HEK293 (cell line): ENCODE measurements at regions of chr20 and their contacts with region 1.

Region 1: GRCh38 chr20:38221119-38221589 is 39.4 kb downstream of the KIAA1755 start:
- H3K4me3 ChIP-seq: no peak overlapping the region
- H3K27ac ChIP-seq: no peak overlapping the region
- H3K4me1 ChIP-seq: no peaks in the 10 kb centered on the region
- CTCF ChIP-seq: peak; percentile 93

Region 2: DNA sequence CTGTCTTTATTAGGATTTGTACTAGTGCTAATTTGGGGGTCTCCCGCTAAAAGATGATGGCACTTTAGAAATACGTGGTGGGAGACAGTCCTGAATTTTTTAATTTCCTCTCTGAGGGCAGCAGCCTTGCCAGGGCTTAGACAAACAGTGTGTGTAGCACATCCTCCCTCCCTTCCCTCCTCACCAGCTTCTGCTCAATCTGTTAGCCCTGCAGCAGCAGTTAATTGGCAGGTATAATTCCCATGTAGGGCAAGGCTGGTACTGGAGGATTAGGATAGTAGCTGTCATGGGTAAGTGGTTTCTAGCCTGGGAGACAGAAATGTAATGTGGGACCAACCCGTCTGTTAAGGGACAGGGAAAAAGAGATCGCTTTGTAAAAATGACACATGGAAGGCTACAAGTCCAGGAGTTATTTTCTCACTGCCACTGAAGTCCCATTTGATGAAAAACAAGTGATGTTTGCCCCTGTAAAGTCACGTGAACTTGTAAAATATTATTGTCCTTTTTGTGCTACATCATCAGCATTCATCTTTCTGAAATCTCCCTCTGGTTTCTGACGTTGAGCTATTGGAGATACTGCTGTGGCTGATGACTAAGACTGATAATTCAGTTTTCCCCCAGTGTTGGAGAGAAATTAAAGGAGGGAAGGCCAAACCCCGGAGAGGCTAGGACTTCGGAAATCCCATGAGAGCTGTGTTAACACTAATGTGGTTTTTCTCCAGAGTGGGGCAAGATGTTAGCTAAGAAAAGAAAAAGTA is 486.7 kb before region 1 on chr20:
- CTCF ChIA-PET with region 1: no interaction called
- POLR2A ChIA-PET with region 1: no interaction called
- H3K4me3 ChIP-seq: no peak overlapping the region
- H3K27ac ChIP-seq: no peak overlapping the region
- H3K4me1 ChIP-seq: peaks cover 13% of the 10 kb centered on the region
- CTCF ChIP-seq: no peak

Region 3: DNA sequence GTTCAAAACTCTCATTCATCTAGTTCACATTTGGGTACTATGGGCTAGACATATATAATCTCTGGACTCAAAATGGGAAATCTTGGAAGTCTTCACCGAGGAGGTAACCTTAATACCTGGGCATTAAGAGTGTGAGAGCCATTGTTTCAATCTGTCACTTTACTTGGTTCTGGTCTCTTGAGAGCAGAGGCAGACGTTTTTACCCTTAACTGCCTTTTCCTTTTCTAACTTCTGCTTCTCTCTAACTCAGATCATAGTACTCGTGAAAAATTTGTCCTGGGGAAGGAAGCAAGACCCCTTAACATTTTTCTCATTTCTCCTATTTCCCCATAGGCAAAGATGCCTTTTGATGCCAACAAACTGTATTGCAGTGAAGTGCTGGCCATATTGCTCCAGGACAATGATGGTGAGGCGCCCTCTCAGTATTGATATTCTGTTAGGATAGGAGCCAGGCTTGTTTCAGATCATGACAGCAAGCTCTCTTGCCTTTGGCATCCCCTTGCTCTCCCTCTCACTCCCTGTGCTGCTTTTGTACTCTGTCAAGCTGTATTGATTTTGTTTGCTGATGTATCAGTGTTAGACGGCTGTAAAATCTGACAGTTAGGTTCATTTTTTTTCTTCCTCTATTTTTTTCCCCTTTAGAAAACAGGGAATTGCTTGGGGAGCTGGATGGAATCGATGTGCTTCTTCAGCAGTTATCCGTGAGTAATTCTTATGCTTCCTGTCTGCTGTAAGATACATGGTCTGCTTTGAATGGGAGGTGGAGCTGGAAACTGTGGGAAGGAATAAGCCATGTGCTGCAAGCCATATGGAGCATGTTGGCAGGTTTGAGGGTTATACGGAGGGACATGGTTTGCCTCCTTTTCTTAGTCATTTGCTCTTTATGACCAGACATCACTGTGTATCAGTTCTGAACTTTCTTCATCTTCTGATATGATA is 443.9 kb before region 1 on chr20:
- CTCF ChIA-PET with region 1: no interaction called
- POLR2A ChIA-PET with region 1: no interaction called
- H3K4me3 ChIP-seq: no peak overlapping the region
- H3K27ac ChIP-seq: no peak overlapping the region
- H3K4me1 ChIP-seq: no peaks in the 10 kb centered on the region
- CTCF ChIP-seq: no peak

Region 4: DNA sequence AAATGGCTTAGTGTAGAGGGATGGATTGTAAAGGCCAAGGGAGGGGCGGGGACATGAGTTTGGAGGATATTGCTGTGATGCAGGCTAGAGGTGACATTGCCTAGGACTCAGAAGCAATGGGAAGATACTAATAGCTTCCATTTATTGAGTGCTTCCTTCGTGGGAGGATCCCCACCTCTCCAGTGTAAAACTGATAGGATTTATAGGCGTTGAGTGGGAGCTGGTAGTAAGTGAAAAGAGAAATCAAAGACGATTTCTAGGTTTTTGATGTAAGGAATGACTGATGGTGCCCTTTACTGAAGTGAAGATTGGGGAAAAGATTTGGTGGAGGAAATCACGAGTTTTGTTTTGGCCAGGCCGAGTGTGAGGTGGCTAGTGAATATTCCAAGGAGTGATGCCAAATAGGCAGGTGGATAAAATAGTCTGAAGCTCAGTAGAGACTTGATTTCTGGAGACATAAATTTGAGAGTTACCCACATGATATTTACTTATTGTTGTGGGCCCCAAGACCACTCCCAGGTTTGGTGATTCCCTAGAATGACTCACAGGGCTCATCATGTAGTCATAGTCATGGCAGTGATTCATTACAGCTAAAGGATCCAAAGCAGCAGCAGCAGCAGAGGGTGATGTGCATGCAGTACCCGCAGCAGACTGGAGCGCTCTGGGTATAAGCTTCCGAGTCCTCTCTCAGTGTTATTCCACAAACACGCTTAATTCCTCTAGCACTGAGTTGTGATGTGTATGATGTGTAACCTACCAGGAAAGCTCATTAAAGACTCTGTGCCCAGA is 177.4 kb before region 1 on chr20:
- CTCF ChIA-PET with region 1: interaction called, 12 read pairs
- POLR2A ChIA-PET with region 1: no interaction called
- H3K4me3 ChIP-seq: no peak overlapping the region
- H3K27ac ChIP-seq: no peak overlapping the region
- H3K4me1 ChIP-seq: no peaks in the 10 kb centered on the region
- CTCF ChIP-seq: no peak

Region 5: GRCh38 chr20:38113401-38114325 is 107.5 kb before region 1 on chr20:
- CTCF ChIA-PET with region 1: interaction called, 44 read pairs
- POLR2A ChIA-PET with region 1: no interaction called
- H3K4me3 ChIP-seq: no peak overlapping the region
- H3K27ac ChIP-seq: no peak overlapping the region
- H3K4me1 ChIP-seq: peaks cover 9% of the 10 kb centered on the region
- CTCF ChIP-seq: 0 out of 2 replicates have a peak, but pooled peaks have one; percentile 41

Region 6: GRCh38 chr20:38173237-38174156 is 47.7 kb before region 1 on chr20:
- CTCF ChIA-PET with region 1: interaction called, 52 read pairs
- POLR2A ChIA-PET with region 1: no interaction called
- H3K4me3 ChIP-seq: no peak overlapping the region
- H3K27ac ChIP-seq: no peak overlapping the region
- H3K4me1 ChIP-seq: no peaks in the 10 kb centered on the region
- CTCF ChIP-seq: no peak

Region 7: GRCh38 chr20:38242848-38243449 is 21.8 kb after region 1 on chr20:
- CTCF ChIA-PET with region 1: interaction called, 15 read pairs
- POLR2A ChIA-PET with region 1: no interaction called
- H3K4me3 ChIP-seq: no peak overlapping the region
- H3K27ac ChIP-seq: no peak overlapping the region
- H3K4me1 ChIP-seq: no peaks in the 10 kb centered on the region
- CTCF ChIP-seq: no peak

Region 8: DNA sequence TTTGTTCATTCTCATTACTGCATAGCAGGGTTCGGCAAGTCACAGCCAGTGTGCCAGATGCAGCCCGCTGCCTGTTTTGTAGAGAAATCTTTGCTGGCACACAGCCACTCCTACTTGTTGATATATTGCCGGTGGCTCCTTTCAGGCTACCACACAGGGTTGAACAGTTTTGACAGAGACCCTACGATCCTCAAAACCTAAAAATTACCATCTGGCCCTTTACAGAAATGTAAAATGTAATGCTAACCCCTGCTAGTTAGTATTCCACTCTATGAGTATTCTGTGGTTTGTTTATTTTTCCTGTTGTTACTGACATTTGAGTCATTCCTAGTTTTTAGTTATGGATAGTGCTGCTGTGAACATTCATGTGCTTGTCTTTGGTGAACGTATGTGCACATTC is 752.5 kb after region 1 on chr20:
- CTCF ChIA-PET with region 1: no interaction called
- POLR2A ChIA-PET with region 1: no interaction called
- H3K4me3 ChIP-seq: no peak overlapping the region
- H3K27ac ChIP-seq: no peak overlapping the region
- H3K4me1 ChIP-seq: peaks cover 5% of the 10 kb centered on the region; the same call in 1 of the 2 replicates
- CTCF ChIP-seq: no peak